ENCODE measurements at regions of chr1 and their contacts with region 1.

Region 1: DNA sequence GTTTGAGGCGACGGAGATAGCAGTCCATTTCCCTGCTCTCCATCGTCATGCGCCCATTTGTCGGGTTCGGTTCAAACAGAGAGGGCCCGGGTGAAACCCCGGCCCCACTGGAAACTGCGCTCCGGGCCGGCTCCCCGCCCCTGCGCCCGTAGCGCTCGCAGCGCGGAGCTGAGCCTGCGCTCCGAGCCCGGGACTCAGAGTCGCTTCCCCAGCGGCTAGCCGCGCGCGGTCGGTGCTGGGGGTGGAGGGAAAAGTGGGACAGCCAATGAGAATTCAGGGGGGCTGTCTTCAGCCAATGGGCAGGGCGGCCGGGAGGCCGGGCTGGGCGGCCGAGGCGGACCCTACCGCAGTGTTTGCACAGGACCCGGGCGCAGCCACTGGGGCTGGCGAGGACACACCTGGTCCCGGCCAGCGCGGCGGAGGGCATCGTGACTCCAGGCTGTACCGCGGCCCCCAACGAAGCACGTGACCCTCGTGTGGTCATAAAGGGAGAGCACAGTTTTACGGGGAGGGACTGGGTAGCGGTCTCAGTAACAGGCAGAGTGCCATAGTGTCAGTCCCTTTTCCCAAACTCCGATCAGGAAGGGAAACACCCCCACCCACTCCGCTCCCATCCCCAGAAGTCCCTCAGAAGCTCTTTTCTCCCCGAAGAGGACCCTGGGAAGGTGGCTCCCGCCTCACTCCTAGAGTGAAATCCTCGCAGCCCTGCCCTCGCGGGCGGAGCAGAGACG is at the start of gene INKA2:
- H3K4me3 ChIP-seq: peak within 1 kb of the TSS; percentile 57
- H3K27ac ChIP-seq: peak within 1 kb of the TSS; percentile 92
- H3K4me1 ChIP-seq: peaks cover 21% of the 10 kb centered on the region
- CTCF ChIP-seq: peak; percentile 27; the same call in 1 of the 2 replicates

Region 2: DNA sequence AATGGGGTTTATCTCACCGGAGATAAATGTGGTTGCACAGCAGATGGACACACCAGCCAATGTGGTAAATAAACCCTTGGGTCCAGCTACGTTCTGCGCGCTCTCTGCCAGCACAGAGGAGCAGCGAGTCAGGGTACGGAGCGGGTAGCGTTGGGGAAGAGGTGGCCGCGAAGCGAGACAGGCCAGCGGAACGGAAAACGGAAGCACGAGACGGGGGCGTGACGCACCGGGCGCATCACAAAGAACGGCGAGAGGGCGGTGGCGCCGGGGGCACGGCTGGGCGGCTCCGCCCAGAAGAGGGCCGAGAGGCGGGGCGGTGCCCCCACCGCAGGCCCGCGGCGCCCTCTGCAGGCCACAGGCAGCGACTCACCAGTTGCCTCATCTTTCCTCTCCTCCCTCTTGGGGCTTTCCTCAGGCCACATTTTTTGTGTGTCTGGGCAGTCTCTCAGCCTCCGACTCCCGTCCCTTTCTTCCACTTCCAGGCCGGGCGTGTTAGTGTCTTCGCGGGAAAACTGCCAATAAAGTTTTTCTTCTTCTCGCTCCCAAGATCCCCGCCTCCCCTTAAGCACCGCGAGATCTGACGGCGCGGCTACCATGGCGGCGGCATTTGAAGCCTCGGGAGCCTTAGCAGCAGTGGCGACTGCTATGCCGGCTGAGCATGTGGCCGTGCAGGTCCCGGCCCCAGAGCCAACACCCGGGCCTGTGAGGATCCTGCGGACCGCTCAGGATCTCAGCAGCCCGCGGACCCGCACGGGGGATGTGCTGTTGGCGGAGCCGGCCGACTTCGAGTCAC is 16.2 kb after region 1 on chr1 and contains the start of gene DDX20:
- CTCF ChIA-PET with region 1: interaction called, 14 read pairs
- POLR2A ChIA-PET with region 1: interaction called, 13 read pairs
- H3K4me3 ChIP-seq: peak within 1 kb of the TSS; percentile 91
- H3K27ac ChIP-seq: peak within 1 kb of the TSS; percentile 72
- H3K4me1 ChIP-seq: peaks cover 4% of the 10 kb centered on the region; the same call in 1 of the 2 replicates
- CTCF ChIP-seq: peak; percentile 97

Region 3: GRCh38 chr1:111937101-111937725 is 197.9 kb after region 1 on chr1:
- CTCF ChIA-PET with region 1: no interaction called
- POLR2A ChIA-PET with region 1: no interaction called
- H3K4me3 ChIP-seq: no peak overlapping the region
- H3K27ac ChIP-seq: no peak overlapping the region
- H3K4me1 ChIP-seq: no peaks in the 10 kb centered on the region
- CTCF ChIP-seq: no peak